ENCODE measurements at regions of chr9 and their contacts with region 1.

Region 1: GRCh38 chr9:32378993-32379729 is 5.3 kb upstream of the ACO1 start:
- DNase-seq: peak in 8 of 9 experiments; percentile 6 to 86 (median 52)
- ATAC-seq: peak; percentile 90
- H3K4me3 ChIP-seq: no peak overlapping the region
- H3K4me3 Mint-ChIP-seq: peak overlapping the region; percentile 0
- H3K27ac ChIP-seq: no peak overlapping the region
- H3K27ac Mint-ChIP-seq: no peak overlapping the region
- H3K4me1 ChIP-seq: peaks cover 12% of the 10 kb centered on the region
- H3K4me1 Mint-ChIP-seq: peaks cover 16% of the 10 kb centered on the region
- H3K27me3 ChIP-seq: no peaks in the 10 kb centered on the region
- H3K27me3 Mint-ChIP-seq: peaks cover 14% of the 10 kb centered on the region
- CTCF ChIP-seq: peak; percentile 63

Region 2: GRCh38 chr9:31700252-31701045 is 678.7 kb before region 1 on chr9:
- CTCF ChIA-PET with region 1: no interaction called
- POLR2A ChIA-PET with region 1: no interaction called
- intact Hi-C with region 1: no loop called
- DNase-seq: no peak
- ATAC-seq: no peak
- H3K4me3 ChIP-seq: no peak overlapping the region
- H3K4me3 Mint-ChIP-seq: no peak overlapping the region
- H3K27ac ChIP-seq: no peak overlapping the region
- H3K27ac Mint-ChIP-seq: no peak overlapping the region
- H3K4me1 ChIP-seq: no peaks in the 10 kb centered on the region
- H3K4me1 Mint-ChIP-seq: peaks cover 6% of the 10 kb centered on the region
- H3K27me3 ChIP-seq: no peaks in the 10 kb centered on the region
- H3K27me3 Mint-ChIP-seq: no peaks in the 10 kb centered on the region
- CTCF ChIP-seq: no peak

Region 3: GRCh38 chr9:32326146-32326545 is 53.0 kb before region 1 on chr9:
- CTCF ChIA-PET with region 1: no interaction called
- POLR2A ChIA-PET with region 1: no interaction called
- intact Hi-C with region 1: no loop called
- DNase-seq: no peak
- ATAC-seq: no peak
- H3K4me3 ChIP-seq: no peak overlapping the region
- H3K4me3 Mint-ChIP-seq: no peak overlapping the region
- H3K27ac ChIP-seq: no peak overlapping the region
- H3K27ac Mint-ChIP-seq: no peak overlapping the region
- H3K4me1 ChIP-seq: no peaks in the 10 kb centered on the region
- H3K4me1 Mint-ChIP-seq: no peaks in the 10 kb centered on the region
- H3K27me3 ChIP-seq: no peaks in the 10 kb centered on the region
- H3K27me3 Mint-ChIP-seq: peaks cover 22% of the 10 kb centered on the region
- CTCF ChIP-seq: no peak

Region 4: GRCh38 chr9:32395490-32396216 is 16.5 kb after region 1 on chr9:
- CTCF ChIA-PET with region 1: interaction called, 31 read pairs
- POLR2A ChIA-PET with region 1: interaction called, 3 read pairs
- intact Hi-C with region 1: no loop called
- DNase-seq: no peak
- ATAC-seq: no peak
- H3K4me3 ChIP-seq: no peak overlapping the region
- H3K4me3 Mint-ChIP-seq: no peak overlapping the region
- H3K27ac ChIP-seq: no peak overlapping the region
- H3K27ac Mint-ChIP-seq: no peak overlapping the region
- H3K4me1 ChIP-seq: no peaks in the 10 kb centered on the region
- H3K4me1 Mint-ChIP-seq: no peaks in the 10 kb centered on the region
- H3K27me3 ChIP-seq: no peaks in the 10 kb centered on the region
- H3K27me3 Mint-ChIP-seq: no peaks in the 10 kb centered on the region
- CTCF ChIP-seq: no peak

Region 5: DNA sequence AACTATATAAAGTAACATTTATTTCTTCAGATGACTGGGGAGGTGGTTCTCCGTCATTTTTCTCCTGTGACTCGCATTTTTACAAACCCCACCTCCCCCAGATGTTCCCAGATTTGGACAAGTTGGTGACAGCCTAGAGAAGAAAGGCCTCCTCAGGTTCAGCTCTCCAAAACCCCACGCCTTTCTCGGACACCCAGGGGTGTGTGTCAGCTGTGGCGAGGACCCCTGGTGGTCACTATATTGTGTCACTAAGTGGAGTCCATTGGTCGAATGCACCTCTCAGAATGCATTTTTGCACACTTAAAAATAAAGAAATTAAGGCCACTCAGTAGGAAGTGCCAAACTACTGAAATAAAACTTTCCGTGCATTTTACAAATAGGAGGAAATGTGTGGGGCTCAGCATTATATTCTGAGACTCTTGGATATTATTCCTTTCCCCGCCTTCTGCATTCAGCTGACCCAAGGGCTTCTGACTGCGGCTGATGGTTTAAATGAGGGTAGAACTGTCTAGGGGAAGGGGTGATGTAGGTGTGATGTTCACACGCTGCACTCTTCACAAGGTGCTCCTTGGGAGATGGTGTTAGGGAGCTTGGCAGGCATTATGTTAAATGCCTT is 52.9 kb after region 1 on chr9:
- CTCF ChIA-PET with region 1: interaction called, 104 read pairs
- POLR2A ChIA-PET with region 1: interaction called, 4 read pairs
- intact Hi-C with region 1: loop called (anchors 1 kb)
- DNase-seq: peak in 8 of 9 experiments; percentile 5 to 57 (median 50)
- ATAC-seq: peak; percentile 46
- H3K4me3 ChIP-seq: no peak overlapping the region
- H3K4me3 Mint-ChIP-seq: no peak overlapping the region
- H3K27ac ChIP-seq: no peak overlapping the region
- H3K27ac Mint-ChIP-seq: no peak overlapping the region
- H3K4me1 ChIP-seq: no peaks in the 10 kb centered on the region
- H3K4me1 Mint-ChIP-seq: no peaks in the 10 kb centered on the region
- H3K27me3 ChIP-seq: no peaks in the 10 kb centered on the region
- H3K27me3 Mint-ChIP-seq: no peaks in the 10 kb centered on the region
- CTCF ChIP-seq: peak; percentile 40

Region 6: GRCh38 chr9:32550562-32551433 is 171.6 kb after region 1 on chr9:
- CTCF ChIA-PET with region 1: interaction called, 42 read pairs
- POLR2A ChIA-PET with region 1: interaction called, 13 read pairs
- intact Hi-C with region 1: loop called (anchors 1 kb)
- DNase-seq: peak; percentile 90 to 99 (median 96)
- ATAC-seq: peak; percentile 85
- H3K4me3 ChIP-seq: peak overlapping the region; percentile 85 to 87
- H3K4me3 Mint-ChIP-seq: peak overlapping the region; percentile 94
- H3K27ac ChIP-seq: peak overlapping the region; percentile 91 to 97
- H3K27ac Mint-ChIP-seq: peak overlapping the region; percentile 99
- H3K4me1 ChIP-seq: peaks cover 23% of the 10 kb centered on the region
- H3K4me1 Mint-ChIP-seq: peaks cover 57% of the 10 kb centered on the region
- H3K27me3 ChIP-seq: no peaks in the 10 kb centered on the region
- H3K27me3 Mint-ChIP-seq: no peaks in the 10 kb centered on the region
- CTCF ChIP-seq: peak; percentile 19

Region 7: DNA sequence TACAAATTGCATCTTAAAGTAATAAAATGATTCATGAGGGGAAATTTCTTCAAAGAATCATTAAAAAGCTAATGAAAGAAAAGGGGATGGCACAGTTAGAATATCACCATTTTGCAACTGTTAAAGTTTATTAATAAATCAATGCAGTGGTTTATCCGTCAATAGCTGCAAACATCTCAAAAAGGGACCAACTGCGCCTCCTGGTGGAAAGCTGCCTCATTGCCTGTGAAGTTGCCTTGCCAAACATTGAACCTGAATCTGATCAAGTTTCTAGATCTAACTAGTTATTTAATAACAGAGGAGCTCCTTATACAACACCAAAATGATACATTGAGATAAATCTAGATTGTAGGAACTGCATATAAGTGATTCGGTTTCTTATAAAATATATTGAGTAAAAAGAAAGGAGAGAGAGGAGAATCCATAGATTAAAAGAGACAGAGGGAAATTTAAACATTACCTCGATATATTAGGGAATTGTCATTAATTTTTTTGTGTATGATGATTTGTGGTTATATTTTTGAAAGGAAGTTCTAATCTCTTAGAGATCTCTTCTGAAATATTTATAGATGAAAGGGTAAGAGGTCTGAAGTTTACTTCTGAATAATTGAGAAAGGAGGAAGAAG is 200.7 kb after region 1 on chr9:
- CTCF ChIA-PET with region 1: interaction called, 392 read pairs
- POLR2A ChIA-PET with region 1: interaction called, 24 read pairs
- intact Hi-C with region 1: loop called (anchors 1 kb)
- DNase-seq: peak; percentile 60 to 87 (median 80)
- ATAC-seq: peak; percentile 78
- H3K4me3 ChIP-seq: no peak overlapping the region
- H3K4me3 Mint-ChIP-seq: no peak overlapping the region
- H3K27ac ChIP-seq: no peak overlapping the region
- H3K27ac Mint-ChIP-seq: no peak overlapping the region
- H3K4me1 ChIP-seq: no peaks in the 10 kb centered on the region
- H3K4me1 Mint-ChIP-seq: no peaks in the 10 kb centered on the region
- H3K27me3 ChIP-seq: no peaks in the 10 kb centered on the region
- H3K27me3 Mint-ChIP-seq: peaks cover 12% of the 10 kb centered on the region
- CTCF ChIP-seq: peak; percentile 98

Region 8: DNA sequence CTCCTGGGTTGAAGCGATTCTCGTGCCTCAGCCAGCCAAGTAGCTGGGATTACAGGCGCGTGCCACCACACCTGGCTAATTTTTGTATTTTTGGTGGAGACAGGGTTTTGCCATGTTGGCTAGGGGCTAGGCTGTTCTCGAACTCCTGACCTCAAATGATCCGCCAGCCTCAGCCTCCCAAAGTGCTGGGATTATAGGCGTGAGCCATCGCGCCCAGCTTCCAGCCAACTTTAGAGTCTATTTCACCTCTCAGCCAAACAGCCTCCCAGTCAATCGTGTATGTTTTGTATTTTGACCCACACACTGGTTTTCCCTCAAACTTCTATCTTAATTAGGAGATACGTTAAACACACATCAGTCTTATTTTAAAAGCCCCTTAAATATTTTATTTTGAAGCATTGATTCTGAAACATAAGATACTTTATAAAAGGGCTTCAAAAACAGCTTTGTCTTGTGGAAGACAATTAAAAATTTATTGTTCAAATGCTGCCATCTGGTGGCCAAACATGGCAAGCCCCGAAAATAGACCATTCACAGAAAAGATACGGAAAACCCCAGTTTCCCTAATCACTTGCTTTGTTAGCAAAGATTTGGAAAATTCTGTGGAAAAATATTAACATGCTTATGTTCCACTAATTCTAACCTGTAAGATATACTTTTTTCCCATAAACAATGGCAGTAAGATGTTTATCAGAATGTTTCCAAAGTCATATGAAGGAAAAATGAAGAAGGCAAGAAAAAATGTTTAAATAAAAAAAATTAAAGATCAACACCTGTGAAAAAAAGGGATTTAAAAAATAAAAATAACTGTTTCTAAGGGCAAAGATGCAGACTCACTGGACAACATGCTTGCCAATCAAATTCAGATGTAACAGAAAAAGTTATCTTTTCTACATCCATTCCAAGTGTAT is 589.2 kb after region 1 on chr9:
- CTCF ChIA-PET with region 1: interaction called, 46 read pairs
- POLR2A ChIA-PET with region 1: no interaction called
- intact Hi-C with region 1: loop called (anchors 1 kb)
- DNase-seq: peak; percentile 8 to 69 (median 55)
- ATAC-seq: no peak
- H3K4me3 ChIP-seq: no peak overlapping the region
- H3K4me3 Mint-ChIP-seq: no peak overlapping the region
- H3K27ac ChIP-seq: no peak overlapping the region
- H3K27ac Mint-ChIP-seq: peak overlapping the region; percentile 34
- H3K4me1 ChIP-seq: no peaks in the 10 kb centered on the region
- H3K4me1 Mint-ChIP-seq: peaks cover 2% of the 10 kb centered on the region
- H3K27me3 ChIP-seq: no peaks in the 10 kb centered on the region
- H3K27me3 Mint-ChIP-seq: no peaks in the 10 kb centered on the region
- CTCF ChIP-seq: peak; percentile 84

Measured in CD8-positive, alpha-beta T cell (primary cell).